ENCODE measurements at regions of chr10 and their contacts with region 1.

Region 1: DNA sequence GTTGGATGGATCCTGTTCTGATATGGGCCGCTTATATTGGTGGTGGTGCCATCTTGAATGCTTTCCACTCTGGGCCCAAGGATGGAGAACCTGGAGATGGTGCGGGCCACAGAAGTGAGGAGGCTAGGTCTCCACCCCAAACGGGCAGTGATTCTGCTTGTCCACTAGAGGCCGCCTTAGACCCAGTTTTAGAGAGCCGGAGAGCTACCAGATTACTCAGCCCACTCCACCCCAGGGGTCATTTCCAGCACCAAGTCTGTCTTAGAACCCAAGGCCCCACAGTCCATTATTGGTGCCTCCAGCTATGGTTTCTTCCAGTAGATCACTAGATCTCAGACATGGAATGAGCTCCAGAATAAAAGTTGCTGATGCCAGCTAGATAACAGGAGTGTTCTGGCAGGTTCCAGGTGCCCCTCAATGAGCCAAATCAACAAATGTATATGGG is 11.8 kb upstream of the CAMK2G start:
- DNase-seq: peak; percentile 78
- ATAC-seq: peak; percentile 95
- H3K4me3 Mint-ChIP-seq: no peak overlapping the region
- H3K27ac Mint-ChIP-seq: no peak overlapping the region
- H3K4me1 Mint-ChIP-seq: peaks cover 19% of the 10 kb centered on the region
- H3K27me3 Mint-ChIP-seq: no peaks in the 10 kb centered on the region
- CTCF ChIP-seq: peak; percentile 79

Region 2: DNA sequence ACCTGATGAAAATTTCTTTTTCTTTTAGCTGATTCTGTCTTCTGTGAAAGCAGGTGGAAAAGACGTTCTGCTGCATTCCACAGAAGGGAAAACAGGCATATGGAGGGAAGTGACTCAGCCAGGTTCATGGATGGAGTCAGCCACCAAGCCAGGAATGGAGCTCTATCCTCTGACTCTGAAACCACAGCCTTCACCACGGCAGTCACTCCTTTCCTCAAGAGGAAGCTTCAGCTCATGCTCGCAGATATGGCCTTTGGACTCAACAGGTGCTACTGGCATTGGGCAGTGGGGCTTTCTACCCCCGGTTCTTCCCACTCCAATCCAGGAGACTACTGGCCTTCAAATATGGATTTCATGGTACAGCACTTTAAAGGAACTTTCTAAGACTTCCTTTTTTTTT is 13.3 kb after region 1 on chr10:
- CTCF ChIA-PET with region 1: interaction called, 10 read pairs
- POLR2A ChIA-PET with region 1: no interaction called
- DNase-seq: no peak
- ATAC-seq: no peak
- H3K4me3 Mint-ChIP-seq: no peak overlapping the region
- H3K27ac Mint-ChIP-seq: no peak overlapping the region
- H3K4me1 Mint-ChIP-seq: peaks cover 8% of the 10 kb centered on the region; the same call in 1 of the 2 replicates
- H3K27me3 Mint-ChIP-seq: no peaks in the 10 kb centered on the region
- CTCF ChIP-seq: no peak

Region 3: DNA sequence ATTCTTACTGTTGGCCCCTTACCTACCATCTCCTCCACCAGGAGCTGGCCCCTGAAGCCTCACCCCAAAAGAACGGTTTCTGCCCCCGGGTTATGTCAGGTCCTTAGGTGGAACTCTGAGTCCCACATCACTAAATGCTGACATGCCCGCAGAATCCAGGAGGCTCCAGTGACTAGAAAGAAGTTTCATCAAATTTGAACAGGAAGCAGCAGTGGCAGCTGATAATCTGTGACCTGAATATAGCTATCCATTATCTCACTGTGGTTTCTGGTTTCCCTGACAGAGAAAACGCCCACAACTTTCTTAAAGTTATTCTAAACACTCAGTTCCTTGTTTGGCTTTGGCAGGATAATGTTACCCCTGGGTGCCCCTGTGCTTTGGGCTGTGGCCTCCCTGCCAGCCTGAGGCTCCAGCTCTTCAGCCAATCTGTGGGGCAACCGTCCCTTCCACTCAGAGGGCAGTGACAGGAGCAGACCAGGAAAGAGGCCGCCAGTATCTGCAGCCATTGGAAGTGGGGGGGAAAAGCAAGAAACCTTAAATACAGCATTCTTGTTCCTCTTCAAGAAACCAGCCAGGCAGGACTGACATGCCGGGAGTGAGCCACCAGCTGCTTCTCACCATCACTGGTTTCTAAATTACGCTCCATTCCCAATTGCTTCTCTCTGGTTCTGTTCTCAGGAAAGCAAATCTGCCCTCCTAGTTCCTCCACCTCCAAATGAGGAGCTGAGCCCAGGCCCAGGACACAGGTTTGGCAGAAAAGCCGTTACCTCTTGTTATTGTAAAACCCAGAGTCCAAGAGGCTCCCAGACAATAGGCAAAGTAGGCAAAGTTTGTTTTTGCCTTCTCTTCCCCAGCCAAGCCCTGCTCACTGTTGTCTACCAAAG is 70.6 kb after region 1 on chr10:
- CTCF ChIA-PET with region 1: interaction called, 26 read pairs
- POLR2A ChIA-PET with region 1: no interaction called
- DNase-seq: no peak
- ATAC-seq: peak; percentile 43
- H3K4me3 Mint-ChIP-seq: no peak overlapping the region
- H3K27ac Mint-ChIP-seq: no peak overlapping the region; the same call in 1 of the 2 replicates
- H3K4me1 Mint-ChIP-seq: peaks cover 10% of the 10 kb centered on the region
- H3K27me3 Mint-ChIP-seq: no peaks in the 10 kb centered on the region
- CTCF ChIP-seq: no peak

Region 4: DNA sequence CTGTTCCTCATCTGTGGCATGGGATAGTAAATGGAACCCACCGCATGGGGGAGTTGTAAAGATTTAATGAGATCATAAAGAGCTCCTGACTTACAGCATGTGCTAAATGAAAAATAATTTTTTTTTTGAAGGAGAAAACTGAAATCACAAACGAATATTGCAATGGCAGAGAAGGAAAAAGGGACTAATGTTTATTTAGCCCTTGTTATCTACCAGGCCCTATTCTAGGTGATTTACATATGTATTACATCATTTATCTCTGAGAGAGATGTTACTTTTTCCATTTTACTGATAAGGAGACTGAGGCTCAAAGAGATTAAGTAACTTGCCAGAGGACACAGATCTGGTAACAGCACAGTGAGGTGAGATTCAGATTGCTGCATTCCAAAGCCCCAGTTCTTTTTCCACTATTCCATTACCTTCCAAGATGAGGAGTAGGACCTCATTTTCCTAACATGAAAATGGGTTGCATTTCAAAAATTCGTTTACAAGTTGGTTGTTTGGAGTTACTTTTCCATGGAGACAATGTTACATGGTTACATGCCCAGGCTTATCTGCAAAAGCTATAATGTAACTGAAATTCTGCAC is 140.4 kb after region 1 on chr10:
- CTCF ChIA-PET with region 1: interaction called, 11 read pairs
- POLR2A ChIA-PET with region 1: no interaction called
- DNase-seq: no peak
- ATAC-seq: no peak
- H3K4me3 Mint-ChIP-seq: no peak overlapping the region
- H3K27ac Mint-ChIP-seq: peak overlapping the region; percentile 11; the same call in 1 of the 2 replicates
- H3K4me1 Mint-ChIP-seq: peaks cover 48% of the 10 kb centered on the region
- H3K27me3 Mint-ChIP-seq: no peaks in the 10 kb centered on the region
- CTCF ChIP-seq: no peak

Region 5: GRCh38 chr10:74103560-74104248 is 217.6 kb after region 1 on chr10:
- CTCF ChIA-PET with region 1: interaction called, 16 read pairs
- POLR2A ChIA-PET with region 1: no interaction called
- DNase-seq: no peak
- ATAC-seq: peak; percentile 81
- H3K4me3 Mint-ChIP-seq: no peak overlapping the region
- H3K27ac Mint-ChIP-seq: peak overlapping the region; percentile 71; the same call in 1 of the 2 replicates
- H3K4me1 Mint-ChIP-seq: no peaks in the 10 kb centered on the region
- H3K27me3 Mint-ChIP-seq: no peaks in the 10 kb centered on the region
- CTCF ChIP-seq: no peak